Naive thymus-derived CD4-positive, alpha-beta T cell (primary cell): ENCODE measurements at regions of chr17 and their contacts with region 1.

Region 1: DNA sequence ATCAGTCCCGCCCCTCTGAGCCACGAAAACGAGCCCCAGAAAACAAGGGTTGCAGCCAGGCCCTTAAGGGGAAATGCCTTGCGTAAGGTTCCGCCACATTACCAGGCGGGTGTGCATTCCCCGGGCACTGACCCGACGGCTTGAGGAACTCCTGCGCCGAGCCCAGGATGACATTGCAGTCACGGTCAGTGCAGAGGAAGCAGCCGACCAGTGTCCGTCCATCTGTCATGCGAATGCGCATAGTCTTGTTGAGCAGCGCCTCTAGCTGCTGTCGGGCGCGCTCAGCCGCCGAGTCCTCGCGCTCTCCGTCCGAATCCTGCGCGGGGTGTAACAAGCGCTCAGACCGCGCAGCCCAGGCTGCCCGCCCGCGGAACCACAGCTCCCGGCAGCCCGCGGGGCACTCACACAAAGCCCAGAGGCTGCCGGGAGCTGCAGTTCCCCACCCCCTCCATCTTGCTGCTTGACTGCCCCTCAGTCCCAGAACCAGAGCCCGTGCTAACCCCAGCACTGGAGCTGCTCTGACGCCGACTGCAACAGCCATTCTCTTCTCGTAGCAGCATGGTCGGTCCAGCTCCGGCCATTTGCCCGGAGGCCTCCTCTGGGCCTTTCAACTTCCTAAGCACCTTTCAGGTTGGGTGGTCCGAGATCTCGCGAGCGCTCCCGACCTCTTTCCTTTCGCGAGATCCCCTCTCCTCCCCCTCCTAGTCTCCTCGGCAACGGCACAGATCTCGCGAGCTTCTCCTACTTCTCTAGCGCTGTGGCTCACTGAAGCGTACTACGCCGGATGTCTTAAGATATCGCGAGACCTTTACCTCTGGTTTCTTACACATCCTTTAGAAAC is at the start of gene NAA38:
- DNase-seq: peak; percentile 81 to 99 (median 97)
- ATAC-seq: peak; percentile 87
- H3K4me3 ChIP-seq: peak within 1 kb of the TSS; percentile 70
- H3K4me3 Mint-ChIP-seq: no peak within 1 kb of the TSS
- H3K27ac ChIP-seq: peak within 1 kb of the TSS; percentile 83
- H3K27ac Mint-ChIP-seq: no peak within 1 kb of the TSS
- H3K4me1 ChIP-seq: peaks cover 25 to 26% of the 10 kb centered on the region in 2 donors
- H3K4me1 Mint-ChIP-seq: peaks cover 0 to 16% (median 5%) of the 10 kb centered on the region in 7 donors
- H3K27me3 ChIP-seq: no peaks in the 10 kb centered on the region
- H3K27me3 Mint-ChIP-seq: no peaks in the 10 kb centered on the region
- total RNA-seq, gene NAA38: 22.1 to 63.8 (median 24.9) TPM

Region 2: DNA sequence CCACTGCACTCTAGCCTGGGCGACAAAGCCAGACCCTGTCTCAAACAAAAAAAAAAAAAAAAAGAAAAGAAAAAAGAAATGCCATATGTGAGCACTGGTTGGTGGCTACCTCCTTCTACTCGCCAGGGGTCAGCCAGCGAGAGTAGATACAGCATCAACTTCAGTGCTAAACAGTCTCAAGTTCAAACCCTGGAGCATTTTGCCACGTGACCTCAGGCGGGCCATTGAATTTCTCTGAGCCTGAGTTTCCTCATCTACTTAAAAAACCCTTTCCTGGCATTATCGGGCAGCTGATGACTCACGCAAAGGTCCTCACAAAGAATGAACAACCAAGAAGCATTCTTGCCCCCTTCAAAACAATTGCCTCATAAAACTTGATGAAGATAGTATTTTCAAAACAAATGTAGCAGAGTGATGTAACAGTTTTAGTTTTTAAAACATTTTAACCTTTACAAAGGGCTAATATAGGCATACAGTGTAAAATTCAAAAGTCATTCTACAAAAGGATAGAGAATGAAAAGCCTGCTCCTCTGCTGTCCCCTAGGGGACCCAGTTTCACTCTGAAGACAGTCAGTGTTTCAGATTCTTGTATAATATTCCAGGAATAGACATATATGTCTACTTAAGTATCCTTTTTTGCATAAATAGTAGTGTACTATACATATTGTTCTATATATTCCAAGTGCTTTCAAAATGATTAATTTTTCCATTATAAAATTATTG is 111.2 kb before region 1 on chr17:
- CTCF ChIA-PET with region 1: interaction called, 3 read pairs
- POLR2A ChIA-PET with region 1: interaction called, 4 read pairs
- intact Hi-C with region 1: loop called in 1 of 2 experiments (anchors 2 kb)
- DNase-seq: no peak
- ATAC-seq: no peak
- H3K4me3 ChIP-seq: no peak overlapping the region
- H3K4me3 Mint-ChIP-seq: no peak overlapping the region
- H3K27ac ChIP-seq: no peak overlapping the region
- H3K27ac Mint-ChIP-seq: no peak overlapping the region
- H3K4me1 ChIP-seq: no peaks in the 10 kb centered on the region
- H3K4me1 Mint-ChIP-seq: peaks cover 0 to 2% (median 0%) of the 10 kb centered on the region in 7 donors
- H3K27me3 ChIP-seq: no peaks in the 10 kb centered on the region
- H3K27me3 Mint-ChIP-seq: peaks cover 2 to 18% (median 10%) of the 10 kb centered on the region in 5 donors

Region 3: GRCh38 chr17:7825206-7825990 is 31.7 kb before region 1 on chr17:
- CTCF ChIA-PET with region 1: interaction called, 9 read pairs
- POLR2A ChIA-PET with region 1: interaction called, 89 read pairs
- intact Hi-C with region 1: loop called in 1 of 2 experiments (anchors 1 kb)
- DNase-seq: no peak
- ATAC-seq: peak; percentile 47
- H3K4me3 ChIP-seq: no peak overlapping the region
- H3K4me3 Mint-ChIP-seq: no peak overlapping the region
- H3K27ac ChIP-seq: no peak overlapping the region
- H3K27ac Mint-ChIP-seq: peak overlapping the region in 1 of 9 donors; percentile 23
- H3K4me1 ChIP-seq: no peaks in the 10 kb centered on the region
- H3K4me1 Mint-ChIP-seq: peaks cover 0 to 5% (median 0%) of the 10 kb centered on the region in 7 donors
- H3K27me3 ChIP-seq: no peaks in the 10 kb centered on the region
- H3K27me3 Mint-ChIP-seq: peaks cover 0 to 32% (median 0%) of the 10 kb centered on the region in 5 donors

Region 4: GRCh38 chr17:7834962-7835813 is 21.9 kb before region 1 on chr17:
- CTCF ChIA-PET with region 1: interaction called, 43 read pairs
- POLR2A ChIA-PET with region 1: interaction called, 89 read pairs
- intact Hi-C with region 1: loop called (anchors 1 kb)
- DNase-seq: peak; percentile 76 to 97 (median 95)
- ATAC-seq: peak; percentile 70
- H3K4me3 ChIP-seq: peak overlapping the region; percentile 96
- H3K4me3 Mint-ChIP-seq: peak overlapping the region; percentile 91 to 99 (median 96)
- H3K27ac ChIP-seq: peak overlapping the region; percentile 96
- H3K27ac Mint-ChIP-seq: peak overlapping the region; percentile 95 to 100 (median 99)
- H3K4me1 ChIP-seq: peaks cover 29 to 38% of the 10 kb centered on the region in 2 donors
- H3K4me1 Mint-ChIP-seq: peaks cover 28 to 60% (median 44%) of the 10 kb centered on the region in 7 donors
- H3K27me3 ChIP-seq: no peaks in the 10 kb centered on the region
- H3K27me3 Mint-ChIP-seq: peaks cover 0 to 28% (median 0%) of the 10 kb centered on the region in 5 donors

Region 5: GRCh38 chr17:7844292-7845154 is 12.6 kb before region 1 on chr17:
- CTCF ChIA-PET with region 1: interaction called, 8 read pairs
- POLR2A ChIA-PET with region 1: interaction called, 39 read pairs
- intact Hi-C with region 1: loop called (anchors 1 kb)
- DNase-seq: peak; percentile 74 to 87 (median 79)
- ATAC-seq: peak; percentile 42
- H3K4me3 ChIP-seq: peak overlapping the region; percentile 84
- H3K4me3 Mint-ChIP-seq: peak overlapping the region; percentile 85 to 99 (median 94)
- H3K27ac ChIP-seq: peak overlapping the region; percentile 100
- H3K27ac Mint-ChIP-seq: peak overlapping the region; percentile 90 to 100 (median 99)
- H3K4me1 ChIP-seq: peaks cover 11 to 26% of the 10 kb centered on the region in 2 donors
- H3K4me1 Mint-ChIP-seq: peaks cover 19 to 41% (median 29%) of the 10 kb centered on the region in 7 donors
- H3K27me3 ChIP-seq: no peaks in the 10 kb centered on the region
- H3K27me3 Mint-ChIP-seq: peaks cover 0 to 2% (median 0%) of the 10 kb centered on the region in 5 donors

Region 6: DNA sequence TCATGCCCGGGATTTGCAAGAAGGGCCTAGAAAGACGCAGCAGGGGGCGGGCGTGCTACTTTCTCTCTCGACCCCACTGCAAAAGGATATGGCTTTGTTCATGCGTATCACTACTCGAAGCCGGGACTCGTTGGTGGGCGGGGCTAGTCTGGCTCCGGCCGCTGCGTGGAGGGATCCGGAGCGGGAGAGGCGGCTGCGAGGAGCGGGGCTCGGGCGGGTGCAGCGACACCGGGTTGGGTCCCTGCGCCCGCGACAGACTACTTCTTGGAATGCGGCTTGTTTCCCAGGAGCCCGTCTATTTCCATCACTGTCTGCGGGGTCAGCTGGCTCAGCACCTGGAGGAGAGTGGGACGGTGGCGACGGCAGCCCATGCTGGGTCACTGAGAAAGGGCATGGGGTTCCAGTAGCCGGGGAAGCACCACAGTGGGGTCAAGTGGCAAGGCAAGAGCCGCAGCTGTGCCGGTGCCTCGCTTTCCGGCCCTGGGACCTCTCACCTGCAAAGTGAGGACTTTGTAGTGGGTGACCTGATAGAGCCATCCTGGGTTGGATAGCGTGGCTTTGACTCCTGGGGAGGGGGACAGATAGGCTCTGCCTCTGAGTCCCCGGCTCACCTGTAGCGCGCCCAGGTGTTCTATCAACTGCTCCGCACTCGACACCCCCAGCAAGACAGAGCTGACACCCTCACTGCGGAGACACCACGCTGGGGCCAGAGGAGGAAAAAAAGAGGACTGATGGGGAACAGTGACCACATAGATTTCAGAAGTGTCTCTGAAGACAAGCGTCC is 65.9 kb after region 1 on chr17:
- CTCF ChIA-PET with region 1: interaction called, 4 read pairs
- POLR2A ChIA-PET with region 1: interaction called, 3 read pairs
- intact Hi-C with region 1: loop called in 1 of 2 experiments (anchors 2 kb)
- DNase-seq: peak; percentile 66 to 88 (median 84)
- ATAC-seq: peak; percentile 99
- H3K4me3 ChIP-seq: peak overlapping the region; percentile 49
- H3K4me3 Mint-ChIP-seq: peak overlapping the region; percentile 76 to 91 (median 87)
- H3K27ac ChIP-seq: peak overlapping the region; percentile 85
- H3K27ac Mint-ChIP-seq: peak overlapping the region; percentile 76 to 98 (median 97)
- H3K4me1 ChIP-seq: peaks cover 5 to 13% of the 10 kb centered on the region in 2 donors
- H3K4me1 Mint-ChIP-seq: peaks cover 10 to 29% (median 22%) of the 10 kb centered on the region in 7 donors
- H3K27me3 ChIP-seq: no peaks in the 10 kb centered on the region
- H3K27me3 Mint-ChIP-seq: no peaks in the 10 kb centered on the region

Region 7: GRCh38 chr17:7931709-7932482 is 74.8 kb after region 1 on chr17 and contains the starts of genes CNTROB and TRAPPC1:
- CTCF ChIA-PET with region 1: interaction called, 7 read pairs
- POLR2A ChIA-PET with region 1: interaction called, 9 read pairs
- intact Hi-C with region 1: loop called (anchors 1 kb)
- DNase-seq: peak; percentile 97 to 100 (median 99)
- ATAC-seq: peak; percentile 98
- H3K4me3 ChIP-seq: peak within 1 kb of the TSS; percentile 66
- H3K4me3 Mint-ChIP-seq: peak within 1 kb of the TSS; percentile 95 to 100 (median 96)
- H3K27ac ChIP-seq: peak within 1 kb of the TSS; percentile 88
- H3K27ac Mint-ChIP-seq: peak within 1 kb of the TSS; percentile 82 to 99 (median 96)
- H3K4me1 ChIP-seq: peaks cover 20 to 28% of the 10 kb centered on the region in 2 donors
- H3K4me1 Mint-ChIP-seq: peaks cover 31 to 60% (median 54%) of the 10 kb centered on the region in 7 donors
- H3K27me3 ChIP-seq: no peaks in the 10 kb centered on the region
- H3K27me3 Mint-ChIP-seq: no peaks in the 10 kb centered on the region
- total RNA-seq, gene CNTROB: 29.0 to 50.5 (median 33.6) TPM
- total RNA-seq, gene TRAPPC1: 71.4 to 216 (median 103) TPM

Region 8: GRCh38 chr17:8016632-8017478 is 159.8 kb after region 1 on chr17:
- CTCF ChIA-PET with region 1: no interaction called
- POLR2A ChIA-PET with region 1: no interaction called
- intact Hi-C with region 1: no loop called
- DNase-seq: peak in 8 of 9 donors; percentile 19 to 56 (median 43)
- ATAC-seq: peak; percentile 88
- H3K4me3 ChIP-seq: peak overlapping the region; percentile 59
- H3K4me3 Mint-ChIP-seq: peak overlapping the region; percentile 74 to 88 (median 82)
- H3K27ac ChIP-seq: no peak overlapping the region
- H3K27ac Mint-ChIP-seq: peak overlapping the region in 2 of 9 donors; percentile 28 to 41
- H3K4me1 ChIP-seq: peaks cover 0 to 3% of the 10 kb centered on the region in 2 donors
- H3K4me1 Mint-ChIP-seq: peaks cover 0 to 21% (median 7%) of the 10 kb centered on the region in 7 donors
- H3K27me3 ChIP-seq: no peaks in the 10 kb centered on the region
- H3K27me3 Mint-ChIP-seq: peaks cover 0 to 38% (median 4%) of the 10 kb centered on the region in 5 donors